Heart right ventricle (tissue), 16 donors: ENCODE measurements at regions of chr1 and their contacts with region 1.

Region 1: DNA sequence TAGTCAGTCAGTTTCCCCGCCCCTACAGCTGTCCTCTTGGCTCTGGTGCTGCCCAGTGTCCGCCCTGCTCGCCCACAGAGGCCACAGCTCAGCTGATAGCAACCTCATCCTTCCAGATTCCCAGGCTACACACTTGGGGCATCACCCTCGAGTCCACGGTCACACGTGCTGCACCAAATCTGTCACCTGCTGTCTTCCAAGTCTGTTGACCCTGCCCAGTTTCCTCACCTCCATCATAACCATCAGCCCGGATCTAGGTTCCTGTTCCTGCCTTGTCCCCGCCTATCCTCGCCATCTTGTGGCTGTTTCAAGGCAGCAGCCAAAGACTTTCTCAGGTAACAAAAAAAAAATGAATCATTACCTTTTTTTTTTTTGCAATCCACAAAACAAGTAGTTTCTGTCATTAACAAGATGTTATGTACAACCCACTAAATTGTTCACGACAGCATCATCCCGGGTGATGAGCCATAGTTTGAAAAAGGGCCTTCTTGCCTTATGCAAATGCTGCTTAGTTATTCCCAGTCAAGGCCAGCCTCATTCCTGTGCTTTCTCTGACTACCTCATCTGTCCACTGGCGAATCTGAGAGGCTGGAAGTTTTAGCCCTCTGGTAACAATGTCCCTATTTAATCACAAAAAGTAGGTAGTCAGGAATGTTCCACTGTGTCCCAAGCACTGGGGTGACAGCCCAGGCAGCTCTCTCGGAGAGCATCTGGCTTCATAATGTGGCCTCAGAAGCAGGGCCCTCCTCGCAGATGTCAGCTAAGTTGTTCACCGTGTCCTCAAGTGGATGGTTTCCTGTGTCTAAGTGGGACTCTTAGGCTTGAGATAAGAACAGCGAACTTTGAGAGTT is 4.9 kb upstream of the MIIP start:
- DNase-seq: no peak
- ATAC-seq: peak in 1 of 8 donors; percentile 21
- H3K4me3 ChIP-seq: no peak overlapping the region
- H3K27ac ChIP-seq: peak overlapping the region in 7 of 10 donors; percentile 21 to 53 (median 33)
- H3K4me1 ChIP-seq: peaks cover 3 to 36% (median 17%) of the 10 kb centered on the region in 9 donors
- H3K27me3 ChIP-seq: no peaks in the 10 kb centered on the region
- CTCF ChIP-seq: no peak

Region 2: DNA sequence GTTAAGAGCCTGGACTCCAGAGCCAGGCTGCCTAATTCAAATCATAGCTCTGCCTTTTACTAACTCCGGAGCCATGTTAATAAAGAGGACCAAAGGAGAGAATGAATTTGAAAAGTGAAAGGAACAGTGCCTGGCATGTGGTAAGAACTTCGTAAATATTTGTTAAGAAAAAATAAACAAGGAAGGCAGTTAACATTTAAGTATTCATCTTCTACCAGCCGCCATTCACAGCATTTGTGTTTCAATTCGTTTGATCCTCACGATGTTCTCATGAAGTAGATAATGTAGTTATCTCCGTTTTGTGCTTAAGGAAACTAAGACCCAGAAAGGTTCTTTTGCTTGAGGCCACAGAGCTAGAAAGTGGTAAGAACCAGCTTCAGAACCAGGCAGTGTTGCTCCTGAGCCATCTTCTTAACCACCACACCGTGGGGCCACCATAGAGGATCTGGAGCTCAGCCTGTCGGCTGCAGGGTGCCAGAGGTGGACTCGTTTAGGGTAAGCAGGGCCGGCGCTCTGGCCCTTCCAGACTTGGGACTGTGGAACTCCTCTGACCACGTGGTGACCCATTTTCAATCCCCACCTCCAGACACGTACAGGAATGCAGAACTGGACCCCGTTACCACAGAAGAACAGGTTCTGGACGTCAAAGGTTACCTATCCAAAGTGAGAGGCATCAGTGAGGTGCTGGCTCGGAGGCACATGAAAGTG is 22.2 kb before region 1 on chr1:
- intact Hi-C with region 1: loop called in 1 of 10 experiments (anchors 2 kb)
- DNase-seq: no peak
- ATAC-seq: no peak
- H3K4me3 ChIP-seq: no peak overlapping the region
- H3K27ac ChIP-seq: peak overlapping the region in 9 of 10 donors; percentile 41 to 100 (median 76)
- H3K4me1 ChIP-seq: peaks cover 7 to 51% (median 25%) of the 10 kb centered on the region in 9 donors
- H3K27me3 ChIP-seq: no peaks in the 10 kb centered on the region
- CTCF ChIP-seq: no peak